Prostate gland (tissue), 2 donors: ENCODE measurements at regions of chr12 and their contacts with region 1.

Region 1: GRCh38 chr12:56189176-56189917 is at the start of gene SMARCC2:
- DNase-seq: peak; percentile 87
- H3K4me3 ChIP-seq: peak within 1 kb of the TSS; percentile 82 to 85
- H3K27ac ChIP-seq: peak within 1 kb of the TSS; percentile 96 to 98
- H3K4me1 ChIP-seq: no peaks in the 10 kb centered on the region
- H3K27me3 ChIP-seq: no peaks in the 10 kb centered on the region
- CTCF ChIP-seq: peak; percentile 69 to 94 (median 88)
- POLR2A ChIP-seq: peak; percentile 3
- total RNA-seq, gene SMARCC2: 60.4 to 101 TPM

Region 2: GRCh38 chr12:56117778-56118687 is 71.3 kb before region 1 on chr12 and contains the start of gene ZC3H10:
- intact Hi-C with region 1: loop called (anchors 1 kb)
- DNase-seq: peak; percentile 97
- H3K4me3 ChIP-seq: peak within 1 kb of the TSS; percentile 61
- H3K27ac ChIP-seq: peak within 1 kb of the TSS; percentile 93 to 97
- H3K4me1 ChIP-seq: peaks cover 8% of the 10 kb centered on the region
- H3K27me3 ChIP-seq: no peaks in the 10 kb centered on the region
- CTCF ChIP-seq: peak; percentile 45 to 94 (median 72)
- POLR2A ChIP-seq: peak; percentile 88
- total RNA-seq, gene ZC3H10: 4.6 to 9.1 TPM

Region 3: DNA sequence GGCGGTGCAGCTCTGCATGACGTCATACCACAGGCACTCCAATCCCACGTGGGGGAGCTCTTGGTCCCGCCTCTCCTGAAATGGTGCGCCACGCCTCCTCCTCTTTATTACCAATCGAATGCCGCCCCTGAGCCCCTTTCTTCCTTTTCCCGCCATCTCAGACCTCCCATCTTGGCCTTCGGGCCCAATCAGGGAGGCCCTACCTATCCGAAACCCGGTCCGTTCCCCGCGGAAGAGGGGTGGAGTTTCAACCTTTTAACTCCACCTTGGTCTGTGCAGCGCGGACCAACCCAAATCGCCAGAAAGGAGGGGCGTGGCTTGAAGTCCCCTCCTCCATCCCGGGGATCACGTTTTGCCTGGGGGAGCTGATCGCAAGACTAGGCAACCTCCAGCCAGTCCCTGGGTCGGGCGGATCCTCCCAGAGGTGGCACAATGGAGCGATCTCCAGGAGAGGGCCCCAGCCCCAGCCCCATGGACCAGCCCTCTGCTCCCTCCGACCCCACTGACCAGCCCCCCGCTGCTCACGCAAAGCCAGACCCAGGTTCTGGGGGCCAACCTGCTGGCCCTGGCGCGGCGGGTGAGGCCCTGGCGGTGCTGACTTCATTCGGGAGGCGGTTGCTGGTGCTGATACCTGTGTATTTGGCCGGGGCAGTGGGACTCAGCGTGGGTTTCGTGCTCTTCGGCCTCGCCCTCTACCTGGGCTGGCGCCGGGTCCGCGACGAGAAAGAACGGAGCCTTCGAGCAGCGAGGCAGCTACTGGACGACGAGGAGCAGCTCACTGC is 61.3 kb before region 1 on chr12 and contains the start of gene ESYT1:
- intact Hi-C with region 1: loop called (anchors 2 kb)
- DNase-seq: peak; percentile 99
- H3K4me3 ChIP-seq: peak within 1 kb of the TSS; percentile 59 to 76
- H3K27ac ChIP-seq: peak within 1 kb of the TSS; percentile 82 to 94
- H3K4me1 ChIP-seq: peaks cover 11% of the 10 kb centered on the region
- H3K27me3 ChIP-seq: no peaks in the 10 kb centered on the region
- CTCF ChIP-seq: peak in 1 of 4 experiments; percentile 19
- POLR2A ChIP-seq: peak; percentile 99
- total RNA-seq, gene ESYT1: 66.8 to 167 TPM

Region 4: DNA sequence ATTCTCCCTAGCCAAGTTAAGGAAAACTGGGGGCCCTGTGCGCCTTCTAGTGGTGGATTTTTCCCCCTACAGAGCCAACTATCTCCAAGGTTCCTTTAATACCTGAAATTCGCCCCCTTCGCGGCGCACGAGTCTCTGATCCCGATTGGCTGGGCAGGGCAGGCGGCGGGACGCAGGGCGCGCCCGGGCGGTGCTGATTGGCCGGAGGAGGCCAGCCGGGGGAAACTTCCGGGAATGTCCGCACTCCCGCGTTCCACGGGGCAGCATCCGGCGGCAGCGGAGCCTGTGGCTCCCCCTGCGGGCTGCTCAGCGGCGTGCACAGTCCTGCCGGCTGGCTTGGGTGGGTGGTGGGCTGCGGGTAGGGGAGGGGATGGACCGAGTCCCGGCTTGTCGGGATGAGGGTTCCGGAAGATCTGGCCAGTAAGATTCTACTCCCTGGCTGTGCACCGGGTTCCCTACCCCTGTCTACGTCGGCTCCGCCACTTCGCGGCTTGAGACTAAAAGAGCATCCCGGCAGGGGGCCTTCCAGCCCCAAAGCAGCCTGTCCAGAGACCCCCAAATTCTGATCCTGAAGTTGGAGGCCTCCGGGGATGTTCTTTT is 34.9 kb after region 1 on chr12 and contains the start of gene NABP2:
- intact Hi-C with region 1: loop called (anchors 2 kb)
- DNase-seq: peak; percentile 98
- H3K4me3 ChIP-seq: peak within 1 kb of the TSS; percentile 46 to 47
- H3K27ac ChIP-seq: peak within 1 kb of the TSS; percentile 75 to 99
- H3K4me1 ChIP-seq: no peaks in the 10 kb centered on the region
- H3K27me3 ChIP-seq: no peaks in the 10 kb centered on the region
- CTCF ChIP-seq: peak; percentile 82 to 99 (median 96)
- POLR2A ChIP-seq: peak; percentile 42
- total RNA-seq, gene NABP2: 21.4 to 33.2 TPM

Region 5: GRCh38 chr12:56299853-56300643 is 110.7 kb after region 1 on chr12 and contains the start of gene CS:
- intact Hi-C with region 1: no loop called
- DNase-seq: peak; percentile 99
- H3K4me3 ChIP-seq: peak within 1 kb of the TSS; percentile 86 to 91
- H3K27ac ChIP-seq: peak within 1 kb of the TSS; percentile 92 to 95
- H3K4me1 ChIP-seq: peaks cover 15% of the 10 kb centered on the region
- H3K27me3 ChIP-seq: no peaks in the 10 kb centered on the region
- CTCF ChIP-seq: no peak
- POLR2A ChIP-seq: peak; percentile 62
- total RNA-seq, gene CS: 106 to 110 TPM

Region 6: GRCh38 chr12:56468216-56469006 is 279.1 kb after region 1 on chr12 and contains the start of gene SPRYD4:
- intact Hi-C with region 1: loop called (anchors 10 kb)
- DNase-seq: peak; percentile 92
- H3K4me3 ChIP-seq: peak within 1 kb of the TSS; percentile 67 to 81
- H3K27ac ChIP-seq: peak within 1 kb of the TSS; percentile 81 to 85
- H3K4me1 ChIP-seq: peaks cover 3% of the 10 kb centered on the region
- H3K27me3 ChIP-seq: no peaks in the 10 kb centered on the region
- CTCF ChIP-seq: peak in 3 of 4 experiments; percentile 61 to 70 (median 62)
- POLR2A ChIP-seq: peak; percentile 79
- total RNA-seq, gene SPRYD4: 2.6 to 5.1 TPM